ENCODE measurements at regions of chr11 and their contacts with region 1.

Region 1: GRCh38 chr11:60363542-60364510 is 14.5 kb upstream of the MS4A7 start:
- DNase-seq: peak; percentile 67
- H3K4me3 ChIP-seq: no peak overlapping the region
- H3K27ac ChIP-seq: no peak overlapping the region
- H3K4me1 ChIP-seq: no peaks in the 10 kb centered on the region
- H3K27me3 ChIP-seq: peaks cover 15 to 16% of the 10 kb centered on the region in 2 experiments
- CTCF ChIP-seq: peak; percentile 66 to 68
- POLR2A ChIP-seq: no peak

Region 2: GRCh38 chr11:60098508-60098907 is 265.3 kb before region 1 on chr11:
- CTCF ChIA-PET with region 1: no interaction called
- POLR2A ChIA-PET with region 1: no interaction called
- dilution Hi-C with region 1: no loop called
- intact Hi-C with region 1: no loop called
- DNase-seq: peak; percentile 94
- H3K4me3 ChIP-seq: no peak overlapping the region
- H3K27ac ChIP-seq: peak overlapping the region; percentile 76
- H3K4me1 ChIP-seq: peaks cover 37% of the 10 kb centered on the region
- H3K27me3 ChIP-seq: no peaks in the 10 kb centered on the region
- CTCF ChIP-seq: no peak
- POLR2A ChIP-seq: no peak

Region 3: DNA sequence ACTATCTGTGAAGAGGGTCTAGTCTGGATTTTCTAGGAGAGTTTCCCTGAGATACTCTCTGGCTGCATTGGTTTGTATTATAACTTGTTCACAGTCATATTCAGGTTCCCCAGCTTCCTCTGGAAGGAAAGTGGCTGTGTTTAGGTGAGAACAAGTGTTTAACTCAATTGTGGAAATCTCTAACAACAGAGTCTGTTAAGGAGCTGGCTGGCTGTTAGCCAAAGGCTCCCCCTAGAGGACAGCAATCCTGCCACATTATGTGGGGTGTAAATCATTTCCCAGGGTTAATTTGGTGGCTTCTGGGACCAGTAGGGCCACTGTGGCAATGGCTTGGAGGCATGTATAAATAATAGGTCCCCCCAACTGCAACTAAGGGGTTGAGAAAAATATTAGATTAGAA is 18.3 kb before region 1 on chr11:
- CTCF ChIA-PET with region 1: interaction called, 85 read pairs
- POLR2A ChIA-PET with region 1: no interaction called
- dilution Hi-C with region 1: no loop called
- intact Hi-C with region 1: no loop called
- DNase-seq: peak; percentile 54
- H3K4me3 ChIP-seq: no peak overlapping the region
- H3K27ac ChIP-seq: no peak overlapping the region
- H3K4me1 ChIP-seq: no peaks in the 10 kb centered on the region
- H3K27me3 ChIP-seq: peaks cover 25 to 26% of the 10 kb centered on the region in 2 experiments
- CTCF ChIP-seq: peak; percentile 46 to 50
- POLR2A ChIP-seq: no peak

Region 4: DNA sequence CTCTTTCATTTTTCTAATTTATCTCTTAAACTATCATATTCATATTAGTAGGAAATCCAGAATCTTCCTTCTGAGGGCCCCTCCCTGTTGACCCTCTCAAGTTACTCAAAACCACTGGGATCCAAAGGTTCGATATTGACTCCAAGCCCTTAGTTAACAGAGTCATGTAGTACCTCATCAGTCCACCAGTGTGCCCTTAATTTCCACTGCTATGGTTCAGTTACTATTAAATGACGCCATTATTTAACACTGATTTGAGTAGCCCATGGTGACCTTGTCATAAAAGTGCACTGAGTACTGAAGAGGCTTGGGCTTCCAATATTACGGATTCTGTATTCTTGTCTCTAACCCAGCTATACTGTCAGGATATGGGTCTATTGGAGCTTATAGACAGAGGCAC is 243.7 kb after region 1 on chr11:
- CTCF ChIA-PET with region 1: interaction called, 19 read pairs
- POLR2A ChIA-PET with region 1: no interaction called
- dilution Hi-C with region 1: no loop called
- intact Hi-C with region 1: no loop called
- DNase-seq: no peak
- H3K4me3 ChIP-seq: no peak overlapping the region
- H3K27ac ChIP-seq: no peak overlapping the region
- H3K4me1 ChIP-seq: no peaks in the 10 kb centered on the region
- H3K27me3 ChIP-seq: peaks cover 0 to 2% of the 10 kb centered on the region in 2 experiments
- CTCF ChIP-seq: no peak
- POLR2A ChIP-seq: no peak

Region 5: GRCh38 chr11:60625262-60625661 is 261.4 kb after region 1 on chr11:
- CTCF ChIA-PET with region 1: interaction called, 147 read pairs
- POLR2A ChIA-PET with region 1: no interaction called
- dilution Hi-C with region 1: no loop called
- intact Hi-C with region 1: no loop called
- DNase-seq: peak; percentile 52
- H3K4me3 ChIP-seq: no peak overlapping the region
- H3K27ac ChIP-seq: no peak overlapping the region
- H3K4me1 ChIP-seq: no peaks in the 10 kb centered on the region
- H3K27me3 ChIP-seq: no peaks in the 10 kb centered on the region
- CTCF ChIP-seq: peak; percentile 8 to 28
- POLR2A ChIP-seq: no peak